Ovary (tissue), 10 donors: ENCODE measurements at regions of chr6 and their contacts with region 1.

Region 1: DNA sequence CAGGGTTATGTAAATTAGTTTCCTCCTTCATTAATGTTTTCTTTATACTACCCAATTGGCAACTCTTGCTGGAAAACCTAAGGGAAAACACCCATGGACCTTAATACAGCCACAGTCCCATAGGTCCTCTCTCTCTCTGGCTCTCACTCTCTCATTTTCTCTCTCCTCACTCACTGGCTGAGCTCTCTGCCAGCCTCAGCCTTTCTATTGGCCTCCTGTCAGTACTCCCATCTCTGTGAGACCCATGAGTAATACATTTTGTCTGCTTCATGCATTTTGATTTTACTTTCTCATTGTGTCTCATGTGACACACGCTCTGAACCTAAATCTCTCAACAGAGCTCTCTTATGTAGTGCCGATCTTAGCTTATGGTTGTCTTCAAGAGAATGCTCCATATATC is 907.5 kb downstream of the C6orf118 start:
- DNase-seq: no peak
- H3K4me3 ChIP-seq: no peak overlapping the region
- H3K27ac ChIP-seq: no peak overlapping the region
- H3K4me1 ChIP-seq: no peaks in the 10 kb centered on the region
- H3K27me3 ChIP-seq: no peaks in the 10 kb centered on the region
- CTCF ChIP-seq: no peak
- EP300 ChIP-seq: no peak
- POLR2A ChIP-seq: no peak

Region 2: GRCh38 chr6:163383912-163384311 is 1018.0 kb before region 1 on chr6:
- intact Hi-C with region 1: loop called in 1 of 4 experiments (anchors 5 kb)
- DNase-seq: no peak
- H3K4me3 ChIP-seq: no peak overlapping the region
- H3K27ac ChIP-seq: no peak overlapping the region
- H3K4me1 ChIP-seq: no peaks in the 10 kb centered on the region
- H3K27me3 ChIP-seq: no peaks in the 10 kb centered on the region
- CTCF ChIP-seq: no peak
- EP300 ChIP-seq: no peak
- POLR2A ChIP-seq: no peak